Left cardiac atrium (tissue), 4 donors: ENCODE measurements at regions of chr22 and their contacts with region 1.

Region 1: GRCh38 chr22:50620593-50621355 is 7.2 kb downstream of the ARSA start:
- DNase-seq: peak; percentile 86
- ATAC-seq: peak; percentile 83 to 84

Region 2: GRCh38 chr22:50250555-50251476 is 370.0 kb before region 1 on chr22 and contains the start of gene HDAC10:
- intact Hi-C with region 1: no loop called
- DNase-seq: peak; percentile 88
- ATAC-seq: peak; percentile 83
- total RNA-seq, gene HDAC10: 11.2 to 14.2 TPM

Region 3: GRCh38 chr22:50582562-50583293 is 38.0 kb before region 1 on chr22 and contains the start of gene CHKB:
- intact Hi-C with region 1: loop called in 1 of 2 experiments (anchors 5 kb)
- DNase-seq: peak; percentile 99
- ATAC-seq: peak; percentile 95 to 98
- total RNA-seq, gene CHKB: 31.6 to 35.3 TPM